ENCODE measurements at regions of chr15 and their contacts with region 1.

Region 1: GRCh38 chr15:60840306-60840702 is 361.4 kb upstream of the ICE2 start:
- DNase-seq: no peak
- ATAC-seq: peak; percentile 1
- H3K4me3 ChIP-seq: peak overlapping the region; percentile 51
- H3K4me3 Mint-ChIP-seq: peak overlapping the region; percentile 75 to 90 (median 82)
- H3K27ac ChIP-seq: peak overlapping the region; percentile 68
- H3K27ac Mint-ChIP-seq: peak overlapping the region; percentile 89 to 97 (median 96)
- H3K4me1 ChIP-seq: peaks cover 61 to 62% of the 10 kb centered on the region in 2 donors
- H3K4me1 Mint-ChIP-seq: peaks cover 50 to 96% (median 77%) of the 10 kb centered on the region in 7 donors
- H3K27me3 ChIP-seq: no peaks in the 10 kb centered on the region
- H3K27me3 Mint-ChIP-seq: peaks cover 0 to 9% (median 0%) of the 10 kb centered on the region in 5 donors

Region 2: DNA sequence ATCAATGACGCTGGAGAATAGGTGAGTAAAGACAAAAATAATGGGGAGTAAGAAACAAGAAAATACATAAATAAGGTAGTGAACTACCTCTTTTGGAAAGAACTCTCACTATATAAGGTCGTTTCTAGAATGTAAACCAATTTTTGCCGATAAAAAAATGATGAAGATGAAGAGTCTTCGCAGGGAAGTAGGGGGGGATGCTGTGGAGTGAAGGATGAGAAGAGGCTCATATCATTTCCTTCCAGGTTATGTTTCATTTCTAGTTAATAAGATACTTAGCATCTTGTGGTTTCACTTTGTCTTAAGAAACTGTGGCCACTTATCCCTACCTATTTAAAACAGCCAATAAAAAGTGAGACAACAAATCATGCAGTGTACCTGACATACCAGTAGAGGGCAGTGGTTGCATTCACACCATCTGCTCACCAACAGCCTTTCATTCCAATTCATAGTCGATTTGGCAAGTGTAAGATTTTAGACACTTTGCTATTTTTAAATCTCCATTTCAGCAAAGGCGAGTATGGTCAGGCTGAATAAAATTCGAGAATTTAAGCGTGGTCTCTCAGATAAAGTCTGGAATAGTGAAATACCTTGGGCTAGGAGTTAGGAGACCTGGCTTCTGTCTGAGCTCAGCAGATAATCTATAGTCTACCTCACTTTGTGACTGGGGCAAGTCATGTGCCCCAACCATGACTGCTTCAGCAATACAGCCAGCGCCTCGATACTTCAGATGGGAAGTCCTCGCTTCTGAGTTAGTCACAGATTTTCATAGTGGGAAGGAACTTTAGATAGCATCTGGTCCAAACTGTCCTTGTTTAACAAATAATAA is 332.5 kb before region 1 on chr15:
- CTCF ChIA-PET with region 1: no interaction called
- POLR2A ChIA-PET with region 1: interaction called, 3 read pairs
- intact Hi-C with region 1: loop called in 1 of 2 experiments (anchors 5 kb)
- DNase-seq: peak in 7 of 9 donors; percentile 55 to 80 (median 73)
- ATAC-seq: peak; percentile 97
- H3K4me3 ChIP-seq: no peak overlapping the region
- H3K4me3 Mint-ChIP-seq: peak overlapping the region in 5 of 10 donors; percentile 7 to 30 (median 10)
- H3K27ac ChIP-seq: peak overlapping the region; percentile 6
- H3K27ac Mint-ChIP-seq: peak overlapping the region; percentile 38 to 86 (median 55)
- H3K4me1 ChIP-seq: peaks cover 4 to 7% of the 10 kb centered on the region in 2 donors
- H3K4me1 Mint-ChIP-seq: peaks cover 16 to 60% (median 42%) of the 10 kb centered on the region in 7 donors
- H3K27me3 ChIP-seq: no peaks in the 10 kb centered on the region
- H3K27me3 Mint-ChIP-seq: no peaks in the 10 kb centered on the region

Region 3: GRCh38 chr15:60649845-60650548 is 190.3 kb before region 1 on chr15:
- CTCF ChIA-PET with region 1: no interaction called
- POLR2A ChIA-PET with region 1: interaction called, 4 read pairs
- intact Hi-C with region 1: loop called (anchors 1 to 2 kb)
- DNase-seq: peak in 8 of 9 donors; percentile 42 to 78 (median 62)
- ATAC-seq: peak; percentile 90
- H3K4me3 ChIP-seq: peak overlapping the region; percentile 33
- H3K4me3 Mint-ChIP-seq: peak overlapping the region; percentile 66 to 84 (median 75)
- H3K27ac ChIP-seq: no peak overlapping the region
- H3K27ac Mint-ChIP-seq: peak overlapping the region; percentile 55 to 96 (median 82)
- H3K4me1 ChIP-seq: peaks cover 18 to 23% of the 10 kb centered on the region in 2 donors
- H3K4me1 Mint-ChIP-seq: peaks cover 24 to 50% (median 39%) of the 10 kb centered on the region in 7 donors
- H3K27me3 ChIP-seq: no peaks in the 10 kb centered on the region
- H3K27me3 Mint-ChIP-seq: peaks cover 0 to 3% (median 0%) of the 10 kb centered on the region in 5 donors

Region 4: DNA sequence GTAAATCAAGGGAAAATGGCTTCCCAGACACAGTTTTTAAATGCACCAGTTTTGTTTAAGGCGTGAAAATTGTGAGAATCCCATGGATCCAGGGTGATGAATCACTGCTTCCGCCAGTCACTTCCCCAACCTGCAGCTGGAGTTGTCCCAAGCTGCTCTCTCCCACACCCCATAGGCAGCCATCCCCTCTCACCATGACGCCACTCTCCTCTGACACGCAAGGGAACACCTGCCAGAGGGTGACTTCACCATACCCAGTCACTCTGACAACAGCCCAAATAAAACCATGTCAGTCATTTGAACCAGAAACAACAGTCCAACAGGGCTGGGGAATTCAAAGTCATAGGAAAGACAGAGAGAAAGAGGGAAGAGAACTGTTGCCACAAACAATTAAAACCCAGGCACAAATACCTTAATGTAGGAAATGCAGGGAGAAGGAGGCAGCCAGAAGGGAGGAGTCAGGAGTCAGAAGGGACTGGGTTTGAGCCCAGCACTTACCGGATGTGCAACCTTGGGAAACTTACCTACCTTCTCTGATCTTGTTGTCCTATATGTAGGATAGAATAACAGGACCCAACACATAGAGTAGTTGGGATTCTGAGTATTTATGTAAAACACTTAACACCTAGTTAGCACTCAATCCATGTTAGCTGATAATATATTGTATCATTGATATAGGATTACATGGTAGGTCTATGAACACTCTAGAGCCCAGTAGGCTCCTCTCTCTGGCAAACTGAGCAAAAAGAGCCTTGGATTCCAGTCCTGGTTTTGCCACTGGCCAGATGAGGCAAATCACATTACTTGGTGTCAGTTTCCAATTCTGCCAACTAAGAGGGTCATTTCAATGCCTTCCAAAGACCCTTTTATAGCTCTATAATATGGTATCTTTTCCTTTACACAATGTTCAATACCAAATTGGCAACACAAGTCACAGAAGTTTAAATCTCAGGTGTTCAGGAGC is 35.0 kb before region 1 on chr15:
- CTCF ChIA-PET with region 1: interaction called, 3 read pairs
- POLR2A ChIA-PET with region 1: interaction called, 16 read pairs
- intact Hi-C with region 1: loop called in 1 of 2 experiments (anchors 1 kb)
- DNase-seq: no peak
- ATAC-seq: no peak
- H3K4me3 ChIP-seq: no peak overlapping the region
- H3K4me3 Mint-ChIP-seq: peak overlapping the region in 1 of 10 donors; percentile 61
- H3K27ac ChIP-seq: no peak overlapping the region
- H3K27ac Mint-ChIP-seq: peak overlapping the region in 7 of 9 donors; percentile 32 to 85 (median 62)
- H3K4me1 ChIP-seq: peaks cover 27 to 34% of the 10 kb centered on the region in 2 donors
- H3K4me1 Mint-ChIP-seq: peaks cover 27 to 77% (median 64%) of the 10 kb centered on the region in 7 donors
- H3K27me3 ChIP-seq: no peaks in the 10 kb centered on the region
- H3K27me3 Mint-ChIP-seq: peaks cover 0 to 2% (median 0%) of the 10 kb centered on the region in 5 donors

Region 5: DNA sequence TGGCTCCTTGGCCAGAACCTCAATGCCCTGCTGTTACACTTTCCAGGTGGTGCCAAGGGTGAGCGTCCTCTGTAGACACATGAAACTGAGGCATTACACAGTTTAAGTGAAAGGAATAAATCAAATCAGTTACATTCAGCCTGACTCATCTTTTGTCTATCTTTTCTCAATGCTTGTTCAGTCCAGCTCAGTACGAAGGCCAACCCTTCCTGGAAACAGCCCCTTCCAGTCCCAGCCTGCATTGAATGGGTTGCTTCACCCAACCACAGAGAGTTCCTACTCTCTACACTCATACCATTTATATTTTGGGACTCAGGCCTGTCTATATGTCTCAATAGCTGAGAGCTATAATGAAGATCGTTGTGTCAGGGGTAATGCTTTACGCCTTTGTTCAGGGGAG is 25.2 kb after region 1 on chr15:
- CTCF ChIA-PET with region 1: interaction called, 18 read pairs
- POLR2A ChIA-PET with region 1: interaction called, 8 read pairs
- intact Hi-C with region 1: loop called in 1 of 2 experiments (anchors 1 kb)
- DNase-seq: no peak
- ATAC-seq: no peak
- H3K4me3 ChIP-seq: no peak overlapping the region
- H3K4me3 Mint-ChIP-seq: no peak overlapping the region
- H3K27ac ChIP-seq: no peak overlapping the region
- H3K27ac Mint-ChIP-seq: peak overlapping the region in 1 of 9 donors; percentile 46
- H3K4me1 ChIP-seq: peaks cover 3 to 6% of the 10 kb centered on the region in 2 donors
- H3K4me1 Mint-ChIP-seq: peaks cover 2 to 22% (median 16%) of the 10 kb centered on the region in 7 donors
- H3K27me3 ChIP-seq: no peaks in the 10 kb centered on the region
- H3K27me3 Mint-ChIP-seq: peaks cover 0 to 8% (median 0%) of the 10 kb centered on the region in 5 donors

Region 6: DNA sequence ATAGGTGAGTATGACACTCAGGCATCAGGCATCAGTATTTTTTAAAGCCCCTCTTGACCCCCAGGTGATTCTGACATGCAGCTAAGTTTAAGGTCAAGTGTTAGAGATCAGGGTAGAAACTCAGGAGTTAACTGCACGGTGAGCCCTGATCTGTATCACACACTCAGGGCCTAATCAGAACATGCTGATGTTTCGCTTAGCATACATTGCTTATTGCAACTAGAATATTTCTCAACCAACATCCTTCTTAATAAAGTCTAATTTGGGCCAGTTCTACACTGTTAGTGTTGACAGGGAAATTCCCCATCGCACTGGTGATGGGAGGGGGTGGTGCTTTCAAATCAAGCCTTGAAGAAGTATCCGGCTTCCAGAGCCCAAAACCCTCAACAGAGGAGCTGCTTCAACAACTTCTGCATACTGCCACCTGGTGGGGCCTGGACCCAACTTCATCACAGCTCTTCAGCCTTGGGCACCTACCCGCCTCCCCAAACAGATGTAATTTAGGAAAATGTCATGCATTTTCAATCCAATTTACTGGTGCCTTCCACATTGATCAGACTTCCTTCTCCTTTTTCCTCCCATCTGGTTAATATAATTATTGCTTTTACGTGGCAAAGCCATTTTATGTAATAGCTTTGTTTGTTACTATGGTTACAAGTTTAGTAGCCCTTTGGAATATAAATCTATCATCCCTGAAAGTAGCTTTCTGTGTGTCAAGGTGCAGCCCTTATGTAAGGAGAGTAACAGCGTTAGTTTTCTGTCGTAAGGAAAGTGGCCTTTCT is 76.6 kb after region 1 on chr15:
- CTCF ChIA-PET with region 1: no interaction called
- POLR2A ChIA-PET with region 1: no interaction called
- intact Hi-C with region 1: loop called (anchors 5 kb)
- DNase-seq: peak; percentile 59 to 89 (median 82)
- ATAC-seq: peak; percentile 99
- H3K4me3 ChIP-seq: no peak overlapping the region
- H3K4me3 Mint-ChIP-seq: peak overlapping the region in 1 of 10 donors; percentile 23
- H3K27ac ChIP-seq: no peak overlapping the region
- H3K27ac Mint-ChIP-seq: peak overlapping the region in 7 of 9 donors; percentile 12 to 79 (median 69)
- H3K4me1 ChIP-seq: peaks cover 5 to 6% of the 10 kb centered on the region in 2 donors
- H3K4me1 Mint-ChIP-seq: peaks cover 7 to 21% (median 10%) of the 10 kb centered on the region in 7 donors
- H3K27me3 ChIP-seq: no peaks in the 10 kb centered on the region
- H3K27me3 Mint-ChIP-seq: peaks cover 0 to 3% (median 0%) of the 10 kb centered on the region in 5 donors

Region 7: GRCh38 chr15:60964527-60964926 is 124.2 kb after region 1 on chr15:
- CTCF ChIA-PET with region 1: no interaction called
- POLR2A ChIA-PET with region 1: no interaction called
- intact Hi-C with region 1: no loop called
- DNase-seq: no peak
- ATAC-seq: no peak
- H3K4me3 ChIP-seq: no peak overlapping the region
- H3K4me3 Mint-ChIP-seq: no peak overlapping the region
- H3K27ac ChIP-seq: no peak overlapping the region
- H3K27ac Mint-ChIP-seq: no peak overlapping the region
- H3K4me1 ChIP-seq: no peaks in the 10 kb centered on the region
- H3K4me1 Mint-ChIP-seq: no peaks in the 10 kb centered on the region
- H3K27me3 ChIP-seq: no peaks in the 10 kb centered on the region
- H3K27me3 Mint-ChIP-seq: peaks cover 0 to 21% (median 8%) of the 10 kb centered on the region in 5 donors

Region 8: GRCh38 chr15:61057376-61057775 is 217.1 kb after region 1 on chr15:
- CTCF ChIA-PET with region 1: no interaction called
- POLR2A ChIA-PET with region 1: no interaction called
- intact Hi-C with region 1: no loop called
- DNase-seq: no peak
- ATAC-seq: no peak
- H3K4me3 ChIP-seq: no peak overlapping the region
- H3K4me3 Mint-ChIP-seq: peak overlapping the region in 1 of 10 donors; percentile 19
- H3K27ac ChIP-seq: no peak overlapping the region
- H3K27ac Mint-ChIP-seq: peak overlapping the region in 1 of 9 donors; percentile 48
- H3K4me1 ChIP-seq: no peaks in the 10 kb centered on the region
- H3K4me1 Mint-ChIP-seq: peaks cover 0 to 8% (median 0%) of the 10 kb centered on the region in 7 donors
- H3K27me3 ChIP-seq: no peaks in the 10 kb centered on the region
- H3K27me3 Mint-ChIP-seq: peaks cover 0 to 14% (median 4%) of the 10 kb centered on the region in 5 donors

Measured in naive thymus-derived CD4-positive, alpha-beta T cell (primary cell).